Common myeloid progenitor, CD34-positive (primary cell): ENCODE measurements at regions of chr2 and their contacts with region 1.

Region 1: GRCh38 chr2:64626963-64627760 is 26.6 kb downstream of the SERTAD2 start:
- DNase-seq: no peak
- H3K4me3 ChIP-seq: no peak overlapping the region
- H3K27ac ChIP-seq: no peak overlapping the region
- H3K4me1 ChIP-seq: no peaks in the 10 kb centered on the region
- H3K27me3 ChIP-seq: no peaks in the 10 kb centered on the region

Region 2: GRCh38 chr2:64609227-64609941 is 17.8 kb before region 1 on chr2:
- CTCF ChIA-PET with region 1: interaction called, 44 read pairs
- POLR2A ChIA-PET with region 1: no interaction called
- DNase-seq: peak; percentile 73 to 86 (median 84)
- H3K4me3 ChIP-seq: peak overlapping the region; percentile 32 to 86 (median 73)
- H3K27ac ChIP-seq: peak overlapping the region; percentile 77 to 85
- H3K4me1 ChIP-seq: peaks cover 10 to 38% (median 32%) of the 10 kb centered on the region in 4 experiments
- H3K27me3 ChIP-seq: no peaks in the 10 kb centered on the region